Activated naive CD4-positive, alpha-beta T cell treated with anti-CD3 and anti-CD28 coated beads for 36 hours (primary cell): ENCODE measurements at regions of chr19 and their contacts with region 1.

Region 1: DNA sequence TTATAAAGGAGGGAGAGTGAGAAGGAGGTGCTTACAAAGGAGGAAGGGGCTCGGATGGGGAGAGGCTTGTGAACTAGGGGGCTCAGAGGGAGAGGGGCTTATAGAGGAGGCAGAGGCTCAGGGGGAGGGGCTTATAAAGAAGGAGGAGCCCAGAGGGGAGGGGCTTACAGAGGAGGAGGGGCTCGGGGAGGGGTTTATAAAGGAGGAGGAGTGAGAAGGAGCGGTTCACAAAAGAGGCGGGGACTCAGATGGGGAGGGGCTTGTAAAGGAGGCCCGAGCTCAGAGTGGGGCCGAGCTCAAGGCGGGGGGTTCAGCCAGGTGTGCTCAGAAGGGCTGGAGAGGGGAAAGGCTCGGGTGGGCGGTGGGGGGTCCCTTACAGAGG is 500 bp downstream of the SMIM24 start:
- DNase-seq: peak; percentile 41
- H3K4me3 Mint-ChIP-seq: no peak overlapping the region
- H3K27ac Mint-ChIP-seq: no peak overlapping the region
- H3K4me1 Mint-ChIP-seq: peaks cover 9% of the 10 kb centered on the region
- H3K27me3 Mint-ChIP-seq: no peaks in the 10 kb centered on the region

Region 2: GRCh38 chr19:3494051-3494450 is 14.2 kb after region 1 on chr19:
- CTCF ChIA-PET with region 1: interaction called, 19 read pairs
- intact Hi-C with region 1: no loop called
- DNase-seq: peak; percentile 75
- H3K4me3 Mint-ChIP-seq: peak overlapping the region; percentile 45
- H3K27ac Mint-ChIP-seq: peak overlapping the region; percentile 86
- H3K4me1 Mint-ChIP-seq: peaks cover 25% of the 10 kb centered on the region
- H3K27me3 Mint-ChIP-seq: no peaks in the 10 kb centered on the region